HepG2 (cell line): ENCODE measurements at regions of chr20 and their contacts with region 1.

Region 1: GRCh38 chr20:52200870-52201269 is 9.3 kb upstream of the ZFP64 start:
- DNase-seq: no peak
- ATAC-seq: peak; percentile 27; the same call in 2 of the 3 replicates
- H3K4me3 ChIP-seq: no peak overlapping the region
- H3K27ac ChIP-seq: no peak overlapping the region
- H3K4me1 ChIP-seq: no peaks in the 10 kb centered on the region
- H3K27me3 ChIP-seq: no peaks in the 10 kb centered on the region
- CTCF ChIP-seq: no peak
- EP300 ChIP-seq: no peak
- POLR2A ChIP-seq: no peak
- RAD21 ChIP-seq: no peak

Region 2: GRCh38 chr20:52219441-52219840 is 18.6 kb after region 1 on chr20:
- CTCF ChIA-PET with region 1: no interaction called
- POLR2A ChIA-PET with region 1: no interaction called
- in situ Hi-C with region 1: no loop called
- intact Hi-C with region 1: loop called (anchors 1 kb)
- DNase-seq: peak; percentile 37
- ATAC-seq: peak; percentile 74
- H3K4me3 ChIP-seq: no peak overlapping the region
- H3K27ac ChIP-seq: no peak overlapping the region
- H3K4me1 ChIP-seq: no peaks in the 10 kb centered on the region
- H3K27me3 ChIP-seq: no peaks in the 10 kb centered on the region; a peak in 2 of 5 replicates
- CTCF ChIP-seq: peak; percentile 54
- EP300 ChIP-seq: no peak
- POLR2A ChIP-seq: no peak
- RAD21 ChIP-seq: no peak